ENCODE measurements at regions of chr16 and their contacts with region 1.

Region 1: GRCh38 chr16:48609652-48610029 is 339 bp downstream of the N4BP1 start:
- DNase-seq: no peak
- H3K4me3 ChIP-seq: peak overlapping the region; percentile 55 to 82
- H3K4me3 Mint-ChIP-seq: peak overlapping the region in 1 of 8 donors; percentile 90
- H3K27ac ChIP-seq: peak overlapping the region; percentile 87
- H3K27ac Mint-ChIP-seq: peak overlapping the region; percentile 92 to 97 (median 95)
- H3K4me1 ChIP-seq: peaks cover 81% of the 10 kb centered on the region
- H3K4me1 Mint-ChIP-seq: peaks cover 35 to 52% (median 39%) of the 10 kb centered on the region in 4 donors
- H3K27me3 ChIP-seq: no peaks in the 10 kb centered on the region
- H3K27me3 Mint-ChIP-seq: no peaks in the 10 kb centered on the region

Region 2: GRCh38 chr16:46973207-46973995 is 1636.2 kb before region 1 on chr16 and contains the start of gene DNAJA2:
- CTCF ChIA-PET with region 1: no interaction called
- POLR2A ChIA-PET with region 1: interaction called, 8 read pairs
- intact Hi-C with region 1: loop called (anchors 2 kb)
- DNase-seq: peak; percentile 87 to 92 (median 91)
- H3K4me3 ChIP-seq: peak within 1 kb of the TSS; percentile 85 to 95
- H3K4me3 Mint-ChIP-seq: peak within 1 kb of the TSS; percentile 92 to 98 (median 95)
- H3K27ac ChIP-seq: peak within 1 kb of the TSS; percentile 91
- H3K27ac Mint-ChIP-seq: peak within 1 kb of the TSS; percentile 95 to 100 (median 99)
- H3K4me1 ChIP-seq: peaks cover 64% of the 10 kb centered on the region
- H3K4me1 Mint-ChIP-seq: peaks cover 35 to 74% (median 54%) of the 10 kb centered on the region in 4 donors
- H3K27me3 ChIP-seq: no peaks in the 10 kb centered on the region
- H3K27me3 Mint-ChIP-seq: no peaks in the 10 kb centered on the region
- total RNA-seq, gene DNAJA2: 73.2 to 79.5 TPM

Region 3: GRCh38 chr16:48318630-48319029 is 291.0 kb before region 1 on chr16:
- CTCF ChIA-PET with region 1: no interaction called
- POLR2A ChIA-PET with region 1: interaction called, 13 read pairs
- intact Hi-C with region 1: no loop called
- DNase-seq: peak; percentile 47 to 69 (median 61)
- H3K4me3 ChIP-seq: no peak overlapping the region
- H3K4me3 Mint-ChIP-seq: peak overlapping the region; percentile 56 to 87 (median 77)
- H3K27ac ChIP-seq: no peak overlapping the region
- H3K27ac Mint-ChIP-seq: peak overlapping the region; percentile 65 to 90 (median 85)
- H3K4me1 ChIP-seq: peaks cover 32% of the 10 kb centered on the region
- H3K4me1 Mint-ChIP-seq: peaks cover 19 to 48% (median 30%) of the 10 kb centered on the region in 4 donors
- H3K27me3 ChIP-seq: no peaks in the 10 kb centered on the region
- H3K27me3 Mint-ChIP-seq: no peaks in the 10 kb centered on the region

Region 4: GRCh38 chr16:48385272-48386150 is 224.1 kb before region 1 on chr16 and contains the start of gene SIAH1:
- CTCF ChIA-PET with region 1: interaction called, 3 read pairs
- POLR2A ChIA-PET with region 1: interaction called, 15 read pairs
- intact Hi-C with region 1: loop called (anchors 1 kb)
- DNase-seq: peak; percentile 76 to 91 (median 88)
- H3K4me3 ChIP-seq: peak within 1 kb of the TSS; percentile 63 to 81
- H3K4me3 Mint-ChIP-seq: peak within 1 kb of the TSS; percentile 89 to 97 (median 94)
- H3K27ac ChIP-seq: peak within 1 kb of the TSS; percentile 65
- H3K27ac Mint-ChIP-seq: peak within 1 kb of the TSS; percentile 90 to 97 (median 94)
- H3K4me1 ChIP-seq: peaks cover 29% of the 10 kb centered on the region
- H3K4me1 Mint-ChIP-seq: peaks cover 17 to 29% (median 20%) of the 10 kb centered on the region in 4 donors
- H3K27me3 ChIP-seq: no peaks in the 10 kb centered on the region
- H3K27me3 Mint-ChIP-seq: no peaks in the 10 kb centered on the region
- total RNA-seq, gene SIAH1: 11.9 to 14.9 TPM

Region 5: DNA sequence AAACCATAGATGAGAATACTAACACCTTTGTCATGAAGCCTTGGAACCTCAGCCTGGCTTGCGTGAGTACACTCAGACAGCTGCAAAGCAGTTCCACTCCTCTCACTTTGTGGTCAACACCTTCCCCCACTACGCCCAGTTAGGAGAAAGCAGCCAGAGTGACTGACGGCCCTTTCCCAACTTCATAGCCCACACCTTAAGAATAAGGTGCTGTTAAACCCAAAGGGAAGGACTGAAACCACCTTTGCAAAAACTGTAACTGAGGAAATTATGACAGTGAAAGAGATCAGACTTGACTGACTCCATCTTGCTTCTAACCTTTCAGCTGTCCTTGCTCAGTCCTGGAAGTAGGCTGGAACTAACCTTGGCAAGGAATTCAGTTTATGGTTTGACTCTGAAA is 13.3 kb before region 1 on chr16:
- CTCF ChIA-PET with region 1: interaction called, 3 read pairs
- POLR2A ChIA-PET with region 1: interaction called, 16 read pairs
- intact Hi-C with region 1: loop called (anchors 1 kb)
- DNase-seq: no peak
- H3K4me3 ChIP-seq: no peak overlapping the region
- H3K4me3 Mint-ChIP-seq: peak overlapping the region in 3 of 8 donors; percentile 43 to 71 (median 64)
- H3K27ac ChIP-seq: no peak overlapping the region
- H3K27ac Mint-ChIP-seq: peak overlapping the region in 6 of 7 donors; percentile 5 to 70 (median 55)
- H3K4me1 ChIP-seq: peaks cover 58% of the 10 kb centered on the region
- H3K4me1 Mint-ChIP-seq: peaks cover 47 to 71% (median 62%) of the 10 kb centered on the region in 4 donors
- H3K27me3 ChIP-seq: no peaks in the 10 kb centered on the region
- H3K27me3 Mint-ChIP-seq: no peaks in the 10 kb centered on the region

Region 6: GRCh38 chr16:48647794-48648193 is 38.2 kb after region 1 on chr16:
- CTCF ChIA-PET with region 1: no interaction called
- POLR2A ChIA-PET with region 1: no interaction called
- intact Hi-C with region 1: no loop called
- DNase-seq: no peak
- H3K4me3 ChIP-seq: no peak overlapping the region
- H3K4me3 Mint-ChIP-seq: peak overlapping the region in 1 of 8 donors; percentile 32
- H3K27ac ChIP-seq: no peak overlapping the region
- H3K27ac Mint-ChIP-seq: peak overlapping the region in 1 of 7 donors; percentile 86
- H3K4me1 ChIP-seq: no peaks in the 10 kb centered on the region
- H3K4me1 Mint-ChIP-seq: no peaks in the 10 kb centered on the region
- H3K27me3 ChIP-seq: no peaks in the 10 kb centered on the region
- H3K27me3 Mint-ChIP-seq: peaks cover 3 to 5% of the 10 kb centered on the region in 2 donors